Calu3 (cell line): ENCODE measurements at regions of chr15 and their contacts with region 1.

Region 1: GRCh38 chr15:80776420-80777045 is 2.6 kb upstream of the CEMIP start:
- DNase-seq: peak; percentile 90
- H3K4me3 Mint-ChIP-seq: no peak overlapping the region
- H3K27ac Mint-ChIP-seq: no peak overlapping the region
- H3K4me1 Mint-ChIP-seq: peaks cover 36% of the 10 kb centered on the region
- H3K27me3 Mint-ChIP-seq: peaks cover 26% of the 10 kb centered on the region
- CTCF ChIP-seq: peak; percentile 77

Region 2: GRCh38 chr15:80455668-80456442 is 320.7 kb before region 1 on chr15:
- CTCF ChIA-PET with region 1: interaction called, 21 read pairs
- intact Hi-C with region 1: loop called (anchors 1 kb)
- DNase-seq: peak; percentile 75
- H3K4me3 Mint-ChIP-seq: peak overlapping the region; percentile 24
- H3K27ac Mint-ChIP-seq: no peak overlapping the region
- H3K4me1 Mint-ChIP-seq: peaks cover 26% of the 10 kb centered on the region
- H3K27me3 Mint-ChIP-seq: peaks cover 9% of the 10 kb centered on the region
- CTCF ChIP-seq: peak; percentile 90

Region 3: DNA sequence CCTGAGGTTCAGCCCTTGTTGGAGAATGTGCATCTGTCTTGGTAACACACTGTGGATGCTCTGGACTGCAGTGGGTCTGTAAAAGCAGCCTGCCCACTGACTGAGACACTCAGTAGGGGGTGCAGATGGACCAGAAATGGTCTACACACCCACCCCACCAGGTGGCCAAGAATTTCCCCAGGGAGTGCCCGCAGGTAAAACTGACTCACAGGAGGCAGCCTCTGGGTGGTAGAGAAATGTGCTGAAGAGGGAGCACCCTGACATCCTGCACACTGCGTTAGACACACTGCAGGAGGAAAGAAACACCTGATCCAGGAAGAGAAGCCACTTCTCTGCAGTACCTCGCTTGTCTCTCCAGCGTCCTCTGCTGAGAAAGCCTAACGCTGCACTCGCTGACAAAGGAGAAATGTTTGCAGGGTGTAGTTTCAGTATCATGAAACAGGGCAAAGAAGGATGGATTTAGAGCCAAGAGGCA is 191.0 kb before region 1 on chr15:
- CTCF ChIA-PET with region 1: interaction called, 8 read pairs
- intact Hi-C with region 1: loop called (anchors 1 kb)
- DNase-seq: peak; percentile 77
- H3K4me3 Mint-ChIP-seq: no peak overlapping the region
- H3K27ac Mint-ChIP-seq: peak overlapping the region; percentile 65
- H3K4me1 Mint-ChIP-seq: peaks cover 57% of the 10 kb centered on the region
- H3K27me3 Mint-ChIP-seq: no peaks in the 10 kb centered on the region
- CTCF ChIP-seq: peak; percentile 50

Region 4: GRCh38 chr15:80660122-80660521 is 116.4 kb before region 1 on chr15:
- CTCF ChIA-PET with region 1: interaction called, 68 read pairs
- intact Hi-C with region 1: loop called (anchors 1 kb)
- DNase-seq: peak; percentile 66
- H3K4me3 Mint-ChIP-seq: no peak overlapping the region
- H3K27ac Mint-ChIP-seq: no peak overlapping the region
- H3K4me1 Mint-ChIP-seq: peaks cover 48% of the 10 kb centered on the region
- H3K27me3 Mint-ChIP-seq: no peaks in the 10 kb centered on the region
- CTCF ChIP-seq: peak; percentile 35

Region 5: GRCh38 chr15:80685628-80686027 is 90.9 kb before region 1 on chr15:
- CTCF ChIA-PET with region 1: no interaction called
- intact Hi-C with region 1: no loop called
- DNase-seq: no peak
- H3K4me3 Mint-ChIP-seq: no peak overlapping the region
- H3K27ac Mint-ChIP-seq: no peak overlapping the region
- H3K4me1 Mint-ChIP-seq: peaks cover 25% of the 10 kb centered on the region
- H3K27me3 Mint-ChIP-seq: no peaks in the 10 kb centered on the region
- CTCF ChIP-seq: no peak

Region 6: DNA sequence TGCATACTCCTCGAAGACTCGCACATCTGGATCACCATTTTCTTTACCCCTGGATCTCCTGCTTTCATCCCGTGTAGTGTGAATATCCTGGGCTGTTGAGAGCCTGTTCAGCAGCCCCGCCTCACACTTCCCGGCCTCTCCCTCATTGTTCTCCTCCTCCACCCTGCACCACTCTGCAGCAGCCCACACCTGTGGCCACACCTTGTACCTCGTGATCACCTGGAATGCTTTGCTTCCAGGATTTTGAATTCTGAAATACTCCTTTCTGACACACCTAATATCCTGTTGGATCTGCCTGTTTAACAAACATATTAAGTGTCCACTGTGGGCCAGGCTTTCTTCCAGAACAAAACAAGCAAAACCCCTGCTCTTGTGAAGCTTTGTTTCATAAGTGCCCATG is 67.0 kb before region 1 on chr15:
- CTCF ChIA-PET with region 1: interaction called, 5 read pairs
- intact Hi-C with region 1: loop called (anchors 5 kb)
- DNase-seq: peak; percentile 76
- H3K4me3 Mint-ChIP-seq: peak overlapping the region; percentile 49
- H3K27ac Mint-ChIP-seq: peak overlapping the region; percentile 51
- H3K4me1 Mint-ChIP-seq: peaks cover 69% of the 10 kb centered on the region
- H3K27me3 Mint-ChIP-seq: no peaks in the 10 kb centered on the region
- CTCF ChIP-seq: no peak

Region 7: DNA sequence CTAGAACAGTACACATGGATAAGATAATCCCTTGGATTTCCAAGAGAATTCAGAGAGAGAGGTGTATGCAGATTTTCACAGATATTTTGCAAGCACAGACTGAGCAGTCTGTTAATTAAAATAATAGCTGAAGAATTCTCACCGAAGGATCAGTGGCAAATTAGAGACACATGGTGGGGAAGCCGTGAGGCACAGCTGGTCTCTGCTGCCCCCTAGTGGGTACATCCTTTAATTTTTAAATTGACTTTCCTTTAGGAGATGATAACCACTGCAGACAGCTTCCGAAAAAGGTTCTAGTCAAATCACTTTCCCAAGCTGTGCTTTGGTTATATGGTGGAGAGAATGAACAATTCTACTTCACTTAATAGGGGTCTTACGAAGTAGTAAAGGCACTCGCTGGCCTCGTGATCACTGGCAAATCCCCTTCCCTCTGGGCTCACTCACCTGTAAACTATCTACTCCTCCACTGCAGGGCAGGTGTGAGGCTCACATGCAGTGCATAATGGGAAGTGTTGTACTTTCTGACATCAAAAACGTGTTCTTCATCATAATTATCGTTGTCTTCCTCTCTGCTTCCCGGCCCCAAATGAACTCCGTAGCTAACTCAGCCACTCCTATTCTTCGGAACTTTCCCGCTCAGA is 193.6 kb after region 1 on chr15:
- CTCF ChIA-PET with region 1: interaction called, 27 read pairs
- intact Hi-C with region 1: loop called (anchors 1 kb)
- DNase-seq: peak; percentile 84
- H3K4me3 Mint-ChIP-seq: no peak overlapping the region
- H3K27ac Mint-ChIP-seq: peak overlapping the region; percentile 46
- H3K4me1 Mint-ChIP-seq: peaks cover 23% of the 10 kb centered on the region
- H3K27me3 Mint-ChIP-seq: no peaks in the 10 kb centered on the region
- CTCF ChIP-seq: peak; percentile 85

Region 8: GRCh38 chr15:81060907-81061306 is 284.4 kb after region 1 on chr15:
- CTCF ChIA-PET with region 1: no interaction called
- intact Hi-C with region 1: no loop called
- DNase-seq: no peak
- H3K4me3 Mint-ChIP-seq: no peak overlapping the region
- H3K27ac Mint-ChIP-seq: no peak overlapping the region
- H3K4me1 Mint-ChIP-seq: no peaks in the 10 kb centered on the region
- H3K27me3 Mint-ChIP-seq: peaks cover 49% of the 10 kb centered on the region
- CTCF ChIP-seq: no peak